ENCODE measurements at regions of chr7 and their contacts with region 1.

Region 1: GRCh38 chr7:32921896-32922295 is 30.3 kb upstream of the KBTBD2 start:
- DNase-seq: no peak
- H3K4me3 ChIP-seq: no peak overlapping the region
- H3K27ac ChIP-seq: no peak overlapping the region
- H3K4me1 ChIP-seq: no peaks in the 10 kb centered on the region
- H3K27me3 ChIP-seq: no peaks in the 10 kb centered on the region
- CTCF ChIP-seq: no peak

Region 2: DNA sequence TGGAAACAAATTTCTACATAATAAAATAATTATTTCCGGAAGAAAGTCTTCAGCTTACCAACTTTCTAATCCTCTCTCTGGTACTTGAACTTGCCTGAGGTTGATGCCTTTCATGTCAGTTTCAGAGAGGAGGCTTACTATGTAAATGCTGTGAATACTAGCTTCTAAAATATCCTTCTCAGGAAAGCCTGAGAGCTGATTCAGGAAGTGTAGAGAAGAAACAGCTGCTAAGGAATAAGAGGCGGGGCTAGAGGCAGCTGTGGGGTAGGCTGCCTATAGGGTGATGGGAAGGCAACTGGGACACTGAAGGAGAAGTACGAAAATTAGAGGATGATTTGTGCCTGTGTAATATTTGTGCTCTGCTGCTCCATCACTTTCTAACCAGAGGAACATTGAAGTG is 357.4 kb before region 1 on chr7:
- CTCF ChIA-PET with region 1: no interaction called
- POLR2A ChIA-PET with region 1: interaction called, 18 read pairs
- intact Hi-C with region 1: no loop called
- DNase-seq: no peak
- H3K4me3 ChIP-seq: no peak overlapping the region
- H3K27ac ChIP-seq: no peak overlapping the region
- H3K4me1 ChIP-seq: no peaks in the 10 kb centered on the region
- H3K27me3 ChIP-seq: no peaks in the 10 kb centered on the region
- CTCF ChIP-seq: no peak

Region 3: DNA sequence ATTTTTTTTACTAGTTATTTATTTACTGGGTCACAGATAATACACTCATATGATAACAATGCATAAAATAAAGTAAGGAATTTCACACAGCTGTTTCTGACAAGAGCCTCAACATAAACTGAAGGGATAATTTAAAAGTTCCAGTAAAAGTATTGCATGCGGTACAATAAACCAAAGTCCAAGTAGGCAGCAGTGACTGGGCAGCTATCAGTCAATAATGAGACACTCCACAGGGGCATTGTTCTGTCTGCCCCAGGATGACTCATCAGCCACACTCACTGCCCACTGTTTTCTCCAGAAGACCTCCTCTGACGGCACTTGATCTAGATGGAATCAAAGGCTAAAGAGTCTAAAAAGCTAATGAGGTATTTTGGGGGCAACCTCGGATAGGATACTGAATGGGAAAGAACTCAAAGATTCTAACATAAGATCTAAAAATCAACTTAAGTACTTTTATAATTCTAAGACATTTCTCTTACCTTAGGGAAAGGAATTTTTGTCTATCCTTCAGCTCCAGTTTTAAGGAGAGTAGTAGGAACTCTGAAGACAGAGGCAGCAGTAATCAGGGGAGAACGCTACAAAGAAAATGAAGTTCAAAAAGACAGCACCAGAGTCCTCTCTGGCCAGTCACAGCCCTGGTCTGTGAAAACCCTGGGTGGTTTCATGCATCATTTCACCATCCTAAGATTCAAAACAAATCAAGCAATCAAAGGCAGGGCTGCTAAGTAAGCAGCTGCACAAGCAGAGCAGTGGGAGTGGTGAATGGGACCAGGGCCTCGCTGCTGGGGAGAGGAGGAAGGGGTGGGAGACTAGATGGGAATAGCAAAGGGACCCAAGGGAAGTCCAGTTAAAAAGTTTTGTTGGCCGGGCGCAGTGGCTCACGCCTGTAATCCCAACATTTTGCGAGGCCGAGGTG is 251.5 kb before region 1 on chr7:
- CTCF ChIA-PET with region 1: no interaction called
- POLR2A ChIA-PET with region 1: no interaction called
- intact Hi-C with region 1: no loop called
- DNase-seq: peak; percentile 70 to 87
- H3K4me3 ChIP-seq: peak overlapping the region; percentile 36; the same call in 1 of the 2 replicates
- H3K27ac ChIP-seq: peak overlapping the region; percentile 97
- H3K4me1 ChIP-seq: peaks cover 56% of the 10 kb centered on the region
- H3K27me3 ChIP-seq: no peaks in the 10 kb centered on the region
- CTCF ChIP-seq: no peak

Region 4: GRCh38 chr7:32846701-32847100 is 75.2 kb before region 1 on chr7:
- CTCF ChIA-PET with region 1: no interaction called
- POLR2A ChIA-PET with region 1: no interaction called
- intact Hi-C with region 1: no loop called
- DNase-seq: peak; percentile 72 to 76
- H3K4me3 ChIP-seq: no peak overlapping the region
- H3K27ac ChIP-seq: no peak overlapping the region
- H3K4me1 ChIP-seq: no peaks in the 10 kb centered on the region
- H3K27me3 ChIP-seq: no peaks in the 10 kb centered on the region
- CTCF ChIP-seq: peak; percentile 97

Region 5: GRCh38 chr7:33278095-33278494 is 356.2 kb after region 1 on chr7:
- CTCF ChIA-PET with region 1: no interaction called
- POLR2A ChIA-PET with region 1: no interaction called
- intact Hi-C with region 1: no loop called
- DNase-seq: no peak
- H3K4me3 ChIP-seq: no peak overlapping the region
- H3K27ac ChIP-seq: no peak overlapping the region
- H3K4me1 ChIP-seq: no peaks in the 10 kb centered on the region
- H3K27me3 ChIP-seq: no peaks in the 10 kb centered on the region
- CTCF ChIP-seq: no peak

Measured in PC-9 (cell line).